Natural killer cell (primary cell): ENCODE measurements at regions of chr16 and their contacts with region 1.

Region 1: DNA sequence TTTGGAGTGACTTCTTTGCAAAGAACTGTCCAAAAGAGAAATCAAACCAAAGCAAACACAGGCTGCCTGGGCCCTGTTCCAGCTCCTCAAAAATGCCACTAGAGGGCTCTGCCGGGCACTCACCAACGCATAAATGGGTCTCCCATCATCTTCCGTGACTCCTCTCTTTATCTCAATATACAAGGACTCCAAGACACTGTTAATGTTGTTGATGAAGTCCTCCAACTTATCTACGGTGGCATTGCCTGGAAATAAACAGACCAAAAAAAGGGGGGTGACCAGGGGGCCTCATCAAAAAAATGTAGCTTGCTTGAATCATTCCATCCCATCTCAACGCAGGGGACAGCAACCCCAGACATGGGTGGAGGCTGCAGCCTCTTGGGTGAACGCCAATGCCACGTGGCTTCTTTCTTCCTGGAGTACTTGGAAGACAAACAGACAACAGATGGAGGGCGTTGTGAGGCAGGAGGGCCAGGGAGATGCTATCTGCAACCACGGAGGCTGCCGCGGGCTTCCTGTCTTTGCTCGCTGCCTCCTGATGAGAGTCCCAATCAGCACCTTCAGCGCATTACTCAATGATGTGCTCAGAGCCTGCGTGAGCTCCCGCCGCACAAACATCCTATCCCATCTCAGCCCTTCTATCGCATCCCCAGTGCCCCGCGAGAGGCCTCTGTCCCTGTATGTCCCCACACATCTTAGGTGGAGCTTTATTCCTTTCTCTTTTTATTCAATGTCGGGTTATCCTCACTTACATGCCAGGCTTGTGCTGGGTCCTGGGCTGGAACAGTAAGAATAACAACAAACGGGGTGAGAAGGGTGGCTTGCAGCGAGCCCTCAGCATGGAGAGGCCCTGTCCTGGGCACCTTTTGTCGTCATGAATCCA is 32.0 kb downstream of the KDM8 start:
- DNase-seq: peak; percentile 66 to 97
- ATAC-seq: peak; percentile 43 to 68 (median 52)
- H3K4me3 ChIP-seq: no peak overlapping the region
- H3K4me3 Mint-ChIP-seq: peak overlapping the region; percentile 85
- H3K27ac ChIP-seq: peak overlapping the region; percentile 99
- H3K27ac Mint-ChIP-seq: peak overlapping the region; percentile 94 to 100
- H3K4me1 ChIP-seq: peaks cover 98% of the 10 kb centered on the region
- H3K4me1 Mint-ChIP-seq: peaks cover 75 to 77% of the 10 kb centered on the region in 2 donors
- H3K27me3 ChIP-seq: no peaks in the 10 kb centered on the region
- H3K27me3 Mint-ChIP-seq: no peaks in the 10 kb centered on the region
- CTCF ChIP-seq: peak; percentile 90

Region 2: DNA sequence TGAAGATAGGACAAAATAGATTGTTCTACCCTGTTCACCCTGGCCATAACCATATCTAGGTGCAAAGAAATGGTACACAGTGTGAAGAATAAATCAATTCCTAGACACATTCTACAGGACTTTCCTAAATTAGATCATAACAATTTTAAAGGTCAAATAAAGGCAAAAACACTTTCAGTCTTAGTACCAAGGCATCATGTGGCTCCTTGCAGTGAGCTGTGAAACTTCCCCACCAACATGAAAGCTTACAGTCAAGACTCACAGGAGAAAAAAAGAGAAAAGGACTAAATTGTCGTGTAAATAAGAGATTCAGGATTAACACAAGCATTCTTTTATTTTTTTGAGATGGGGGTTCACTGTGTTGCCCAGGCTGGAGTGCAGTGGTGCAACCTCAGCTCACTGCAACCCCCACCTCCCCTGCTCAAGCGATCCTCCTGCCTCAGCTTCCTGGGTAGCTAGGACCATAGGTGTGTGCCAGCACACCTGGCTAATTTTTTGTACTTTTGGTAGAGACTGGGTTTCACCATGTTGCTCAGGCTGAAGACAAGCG is 19.0 kb after region 1 on chr16:
- intact Hi-C with region 1: loop called (anchors 2 kb)
- DNase-seq: peak in 1 of 2 donors; percentile 61
- ATAC-seq: peak; percentile 68 to 88 (median 81)
- H3K4me3 ChIP-seq: no peak overlapping the region
- H3K4me3 Mint-ChIP-seq: no peak overlapping the region
- H3K27ac ChIP-seq: peak overlapping the region; percentile 32
- H3K27ac Mint-ChIP-seq: peak overlapping the region; percentile 83 to 85
- H3K4me1 ChIP-seq: peaks cover 17% of the 10 kb centered on the region
- H3K4me1 Mint-ChIP-seq: peaks cover 18 to 33% of the 10 kb centered on the region in 2 donors
- H3K27me3 ChIP-seq: no peaks in the 10 kb centered on the region
- H3K27me3 Mint-ChIP-seq: no peaks in the 10 kb centered on the region
- CTCF ChIP-seq: no peak

Region 3: DNA sequence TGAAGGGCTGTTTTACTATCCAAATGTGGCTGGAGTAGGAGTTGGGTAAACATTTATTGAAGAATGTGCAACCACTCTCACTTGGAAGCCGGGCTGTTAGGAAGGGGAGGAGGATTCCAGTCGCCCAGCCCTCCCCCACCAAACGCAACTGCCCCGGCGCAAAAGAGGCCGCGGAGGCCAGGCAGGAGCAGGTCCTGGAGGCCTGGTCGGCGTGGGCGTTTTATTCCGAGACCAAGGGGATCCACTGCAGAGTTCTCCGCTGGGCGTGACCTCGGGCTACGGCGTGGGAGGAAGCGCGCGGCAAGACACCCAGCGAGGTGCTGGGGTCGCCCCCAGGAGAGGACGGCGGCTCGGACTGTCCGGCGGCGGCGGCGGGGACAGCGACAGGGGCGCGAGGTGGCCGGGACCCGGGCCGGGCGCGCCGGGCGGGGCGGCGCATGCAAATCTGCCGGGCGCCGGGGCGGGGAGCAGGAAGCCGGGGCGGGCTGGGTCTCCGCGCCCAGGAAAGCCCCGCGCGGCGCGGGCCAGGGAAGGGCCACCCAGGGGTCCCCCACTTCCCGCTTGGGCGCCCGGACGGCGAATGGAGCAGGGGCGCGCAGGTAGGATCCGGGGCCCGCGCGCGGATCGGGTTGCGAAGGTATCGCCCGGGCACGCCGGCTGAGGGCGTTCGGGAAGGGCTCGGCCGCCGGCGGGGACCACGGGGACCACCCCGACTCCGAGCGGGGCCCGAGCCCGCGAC is 78.3 kb after region 1 on chr16 and contains the start of gene IL4R:
- intact Hi-C with region 1: loop called (anchors 2 kb)
- DNase-seq: peak; percentile 68 to 83
- ATAC-seq: peak; percentile 65 to 80 (median 79)
- H3K4me3 ChIP-seq: peak within 1 kb of the TSS; percentile 72
- H3K4me3 Mint-ChIP-seq: peak within 1 kb of the TSS; percentile 96
- H3K27ac ChIP-seq: peak within 1 kb of the TSS; percentile 92
- H3K27ac Mint-ChIP-seq: peak within 1 kb of the TSS; percentile 89 to 91
- H3K4me1 ChIP-seq: peaks cover 52% of the 10 kb centered on the region
- H3K4me1 Mint-ChIP-seq: peaks cover 36 to 50% of the 10 kb centered on the region in 2 donors
- H3K27me3 ChIP-seq: no peaks in the 10 kb centered on the region
- H3K27me3 Mint-ChIP-seq: no peaks in the 10 kb centered on the region
- CTCF ChIP-seq: no peak
- total RNA-seq, gene IL4R: 70.2 to 87.2 (median 86.0) TPM

Region 4: DNA sequence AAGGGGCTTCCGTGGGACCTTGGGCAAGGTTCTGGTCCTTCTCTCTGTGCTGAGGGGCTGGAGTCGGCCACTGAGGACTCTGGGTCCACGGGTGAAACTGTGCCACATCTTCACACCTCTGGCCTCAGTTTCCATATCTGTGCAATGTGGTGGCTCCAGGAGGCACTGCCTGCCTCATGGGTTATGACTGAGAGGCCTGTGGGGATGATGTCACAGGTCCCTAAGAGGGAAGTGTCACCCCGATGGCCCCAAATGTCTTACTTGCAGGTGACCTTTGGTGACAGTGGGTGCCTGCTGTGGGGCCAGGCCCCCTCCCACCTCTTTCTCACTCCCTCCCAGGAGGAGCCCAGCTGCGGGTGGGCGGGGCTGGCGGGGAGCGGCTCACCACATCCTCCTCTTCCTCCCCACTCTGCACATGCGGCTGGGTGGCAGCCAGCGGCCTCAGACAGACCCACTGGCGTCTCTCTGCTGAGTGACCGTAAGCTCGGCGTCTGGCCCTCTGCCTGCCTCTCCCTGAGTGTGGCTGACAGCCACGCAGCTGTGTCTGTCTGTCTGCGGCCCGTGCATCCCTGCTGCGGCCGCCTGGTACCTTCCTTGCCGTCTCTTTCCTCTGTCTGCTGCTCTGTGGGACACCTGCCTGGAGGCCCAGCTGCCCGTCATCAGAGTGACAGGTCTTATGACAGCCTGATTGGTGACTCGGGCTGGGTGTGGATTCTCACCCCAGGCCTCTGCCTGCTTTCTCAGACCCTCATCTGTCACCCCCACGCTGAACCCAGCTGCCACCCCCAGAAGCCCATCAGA is 166.7 kb after region 1 on chr16 and contains the start of gene IL21R:
- intact Hi-C with region 1: loop called (anchors 2 kb)
- DNase-seq: peak; percentile 85 to 92
- ATAC-seq: peak; percentile 77 to 92 (median 89)
- H3K4me3 ChIP-seq: peak within 1 kb of the TSS; percentile 72
- H3K4me3 Mint-ChIP-seq: peak within 1 kb of the TSS; percentile 98
- H3K27ac ChIP-seq: peak within 1 kb of the TSS; percentile 92
- H3K27ac Mint-ChIP-seq: peak within 1 kb of the TSS; percentile 98 to 99
- H3K4me1 ChIP-seq: peaks cover 89% of the 10 kb centered on the region
- H3K4me1 Mint-ChIP-seq: peaks cover 74 to 82% of the 10 kb centered on the region in 2 donors
- H3K27me3 ChIP-seq: no peaks in the 10 kb centered on the region
- H3K27me3 Mint-ChIP-seq: no peaks in the 10 kb centered on the region
- CTCF ChIP-seq: no peak
- total RNA-seq, gene IL21R: 24.3 to 45.7 (median 26.5) TPM